Cardiac septum (tissue), 1 donor: ENCODE measurements at regions of chr15 and their contacts with region 1.

Region 1: GRCh38 chr15:73717802-73718201 is 33.6 kb downstream of the CD276 start:
- DNase-seq: no peak

Region 2: DNA sequence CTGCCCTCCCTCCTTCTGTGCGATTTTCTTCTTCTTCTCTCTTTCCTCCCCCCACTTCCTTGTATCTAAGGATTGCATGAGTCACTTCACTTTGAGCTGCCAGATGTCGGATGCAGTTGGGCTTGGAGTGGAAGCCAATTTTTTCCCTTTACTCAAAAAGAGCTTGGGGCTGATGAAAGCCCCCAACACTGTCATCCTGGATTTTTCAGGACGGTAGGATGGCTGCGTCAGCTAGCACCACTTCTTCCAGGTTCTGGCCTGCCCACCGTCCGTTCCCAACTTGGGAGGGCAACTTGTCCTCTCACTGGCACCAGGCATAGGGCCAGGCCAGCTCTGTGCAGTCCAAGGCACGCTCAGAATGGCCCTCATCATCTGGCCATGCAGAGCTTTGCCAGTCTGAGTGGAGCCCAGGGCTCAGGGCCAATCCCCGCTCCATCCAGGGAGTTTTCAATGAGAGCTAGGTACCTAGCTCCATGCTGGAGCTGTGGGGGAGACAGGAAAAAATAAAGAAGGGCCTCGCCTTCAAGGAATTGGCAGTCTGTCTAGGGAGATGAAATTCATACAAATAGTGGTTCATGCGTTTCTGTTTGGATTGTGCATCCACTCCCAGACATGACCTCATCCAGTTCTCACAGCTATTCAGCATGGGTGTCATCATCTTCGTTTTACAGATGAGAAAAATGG is 83.0 kb after region 1 on chr15:
- intact Hi-C with region 1: loop called (anchors 5 kb)
- DNase-seq: peak; percentile 85